Pancreas (tissue), 10 donors: ENCODE measurements at regions of chr11 and their contacts with region 1.

Region 1: DNA sequence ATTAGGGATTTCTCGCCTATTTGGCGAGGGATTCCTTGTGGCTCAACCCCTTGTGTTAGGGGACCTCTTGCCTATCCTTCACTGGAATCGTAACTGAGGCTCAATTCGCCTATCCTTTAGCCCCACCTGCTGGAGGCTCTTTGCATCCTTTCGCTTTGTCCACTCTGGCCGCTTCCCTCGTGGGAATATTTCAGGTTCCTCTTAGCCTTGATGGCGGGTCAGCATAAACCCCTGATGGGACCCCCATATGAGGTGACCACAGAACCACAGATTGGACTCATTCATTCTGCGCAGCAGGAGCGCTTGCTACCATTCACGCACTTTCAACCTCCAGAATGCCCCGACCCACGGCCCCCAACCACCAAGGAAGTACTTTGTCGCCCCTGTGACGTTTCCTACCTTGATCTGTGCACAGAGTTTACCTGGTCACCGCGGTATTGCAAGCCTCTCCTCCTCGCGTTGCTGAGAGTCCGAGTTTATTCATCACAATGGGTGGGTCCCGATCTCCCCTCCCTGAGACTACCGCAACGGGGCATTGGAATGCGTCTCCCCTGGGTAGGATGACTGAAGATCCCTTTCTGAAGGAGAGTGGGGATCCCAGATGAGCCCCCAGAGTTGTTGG is at the start of gene OR52N2:
- DNase-seq: peak in 5 of 6 donors; percentile 39 to 79 (median 71)
- ATAC-seq: peak; percentile 92 to 99 (median 98)
- H3K4me3 ChIP-seq: peak within 1 kb of the TSS; percentile 13 to 63 (median 26)
- H3K27ac ChIP-seq: peak within 1 kb of the TSS in 2 of 4 donors; percentile 13 to 18
- H3K4me1 ChIP-seq: peaks cover 0 to 3% (median 0%) of the 10 kb centered on the region in 3 donors
- H3K27me3 ChIP-seq: no peaks in the 10 kb centered on the region
- CTCF ChIP-seq: peak; percentile 50 to 72 (median 62)
- total RNA-seq, gene OR52N2: 0.19 to 0.31 TPM in 2 of 6 donors, not detected in the others

Region 2: GRCh38 chr11:5123802-5124521 is 684.6 kb before region 1 on chr11:
- intact Hi-C with region 1: loop called in 1 of 3 experiments (anchors 10 kb)
- DNase-seq: peak; percentile 27 to 68 (median 37)
- ATAC-seq: peak in 3 of 4 donors; percentile 87 to 93 (median 89)
- H3K4me3 ChIP-seq: no peak overlapping the region
- H3K27ac ChIP-seq: no peak overlapping the region
- H3K4me1 ChIP-seq: no peaks in the 10 kb centered on the region
- H3K27me3 ChIP-seq: no peaks in the 10 kb centered on the region
- CTCF ChIP-seq: peak; percentile 68 to 86 (median 77)

Region 3: DNA sequence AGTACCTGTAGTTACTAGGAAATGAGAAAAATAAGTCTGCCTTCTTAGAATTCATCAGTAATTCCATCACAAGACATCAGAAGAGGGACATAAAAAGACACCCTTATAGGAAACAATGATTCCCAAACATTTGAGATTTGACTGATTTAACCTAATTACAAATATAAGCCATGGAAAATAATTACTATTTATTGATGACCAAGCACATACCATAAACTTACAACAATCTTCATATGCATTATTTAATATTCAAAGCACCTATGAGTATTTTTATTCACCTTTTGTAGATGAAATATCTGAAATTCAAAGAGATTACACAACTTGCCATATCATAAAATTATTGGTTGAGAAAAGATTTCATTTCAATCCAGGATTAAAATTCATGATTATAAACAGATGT is 334.7 kb before region 1 on chr11:
- intact Hi-C with region 1: loop called in 1 of 3 experiments (anchors 5 kb)
- DNase-seq: no peak
- ATAC-seq: no peak
- H3K4me3 ChIP-seq: no peak overlapping the region
- H3K27ac ChIP-seq: no peak overlapping the region
- H3K4me1 ChIP-seq: no peaks in the 10 kb centered on the region
- H3K27me3 ChIP-seq: no peaks in the 10 kb centered on the region
- CTCF ChIP-seq: no peak

Region 4: GRCh38 chr11:5865826-5866225 is 57.2 kb after region 1 on chr11:
- intact Hi-C with region 1: no loop called
- DNase-seq: no peak
- ATAC-seq: no peak
- H3K4me3 ChIP-seq: no peak overlapping the region
- H3K27ac ChIP-seq: no peak overlapping the region
- H3K4me1 ChIP-seq: no peaks in the 10 kb centered on the region
- H3K27me3 ChIP-seq: no peaks in the 10 kb centered on the region
- CTCF ChIP-seq: no peak

Region 5: GRCh38 chr11:6127881-6128280 is 319.3 kb after region 1 on chr11:
- intact Hi-C with region 1: no loop called
- DNase-seq: no peak
- ATAC-seq: no peak
- H3K4me3 ChIP-seq: no peak overlapping the region
- H3K27ac ChIP-seq: no peak overlapping the region
- H3K4me1 ChIP-seq: no peaks in the 10 kb centered on the region
- H3K27me3 ChIP-seq: no peaks in the 10 kb centered on the region
- CTCF ChIP-seq: no peak

Region 6: DNA sequence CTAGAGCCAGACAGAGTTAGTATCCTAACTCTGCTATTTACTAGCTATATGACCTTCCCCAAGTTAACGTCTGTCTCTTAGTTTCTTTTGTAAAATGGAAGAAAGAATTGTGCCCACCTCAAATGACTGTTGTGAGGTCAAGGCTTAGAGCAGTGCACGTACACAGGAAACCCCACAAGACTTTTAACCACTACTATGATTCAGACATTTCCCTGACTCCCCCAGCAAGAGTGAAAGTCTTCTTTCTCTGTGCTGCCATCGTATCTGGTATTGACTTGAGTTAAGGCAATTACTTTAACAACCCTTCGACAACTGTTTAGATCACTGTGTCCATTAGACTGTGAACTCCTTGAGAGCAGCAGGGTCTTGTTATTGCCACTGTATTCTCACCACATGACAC is 387.8 kb after region 1 on chr11:
- intact Hi-C with region 1: no loop called
- DNase-seq: no peak
- ATAC-seq: no peak
- H3K4me3 ChIP-seq: no peak overlapping the region
- H3K27ac ChIP-seq: no peak overlapping the region
- H3K4me1 ChIP-seq: no peaks in the 10 kb centered on the region
- H3K27me3 ChIP-seq: no peaks in the 10 kb centered on the region
- CTCF ChIP-seq: no peak